ENCODE measurements at regions of chr22 and their contacts with region 1.

Region 1: DNA sequence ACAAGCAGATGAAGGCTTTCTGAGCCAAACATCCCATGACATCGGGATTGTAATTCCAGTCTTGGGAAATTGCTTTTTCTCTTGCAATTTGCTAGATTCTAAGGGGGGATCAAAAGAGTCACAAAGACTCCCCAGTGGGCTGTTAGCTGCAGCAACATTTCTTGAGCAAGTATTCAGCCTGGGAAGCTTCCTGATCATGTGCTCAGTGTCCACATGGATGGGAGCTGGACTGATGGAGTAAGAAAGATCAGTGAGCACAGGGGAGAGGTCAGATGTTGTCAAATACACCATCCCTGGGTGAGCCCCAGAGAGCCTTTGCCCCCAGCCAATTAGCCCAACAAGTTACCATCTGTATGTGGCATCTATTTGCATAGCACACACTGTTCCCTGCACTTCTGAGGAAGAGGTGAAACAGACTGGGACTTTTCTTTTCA is 10.2 kb upstream of the GRK3 start:
- DNase-seq: no peak
- H3K4me3 Mint-ChIP-seq: no peak overlapping the region
- H3K27ac Mint-ChIP-seq: no peak overlapping the region
- H3K4me1 Mint-ChIP-seq: peaks cover 6% of the 10 kb centered on the region
- H3K27me3 Mint-ChIP-seq: peaks cover 2% of the 10 kb centered on the region

Region 2: DNA sequence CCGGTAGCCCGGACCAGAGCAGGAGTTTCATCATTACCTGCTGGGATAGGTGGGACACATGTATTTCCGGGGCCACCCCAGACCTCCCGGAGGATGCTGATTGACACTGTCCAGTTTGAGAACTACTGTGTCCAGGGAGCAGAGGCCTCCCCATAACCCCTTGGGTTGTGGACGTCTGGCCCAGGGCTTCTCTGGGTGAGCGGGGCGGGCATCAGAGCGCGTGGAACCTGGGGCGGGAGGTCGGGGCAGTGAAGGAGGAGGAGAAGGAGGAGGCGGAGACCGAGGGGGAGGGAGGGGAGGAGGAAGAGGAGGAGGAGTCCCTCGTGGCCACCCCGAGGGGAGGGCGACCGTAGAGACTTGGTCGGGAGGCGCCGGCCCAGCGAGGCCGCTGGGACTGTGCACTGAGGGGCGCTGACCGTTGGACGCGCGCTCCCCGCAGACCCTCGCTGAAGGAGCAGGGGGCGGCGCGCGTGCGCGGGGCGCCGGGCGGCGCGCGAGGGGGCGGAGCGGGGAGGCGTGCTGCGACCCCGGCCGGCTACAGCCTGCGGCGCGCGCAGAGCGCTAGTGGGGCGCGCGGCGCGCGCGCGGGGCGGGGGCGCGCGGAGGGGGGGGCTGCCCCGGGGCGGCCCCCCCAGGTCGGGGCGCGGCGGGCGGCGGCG is 10.2 kb after region 1 on chr22 and contains the start of gene GRK3:
- CTCF ChIA-PET with region 1: interaction called, 10 read pairs
- POLR2A ChIA-PET with region 1: no interaction called
- DNase-seq: peak; percentile 80
- H3K4me3 Mint-ChIP-seq: peak within 1 kb of the TSS; percentile 96
- H3K27ac Mint-ChIP-seq: peak within 1 kb of the TSS; percentile 91
- H3K4me1 Mint-ChIP-seq: peaks cover 59% of the 10 kb centered on the region
- H3K27me3 Mint-ChIP-seq: peaks cover 4% of the 10 kb centered on the region
- total RNA-seq, gene GRK3: 23.4 to 24.2 TPM

Region 3: DNA sequence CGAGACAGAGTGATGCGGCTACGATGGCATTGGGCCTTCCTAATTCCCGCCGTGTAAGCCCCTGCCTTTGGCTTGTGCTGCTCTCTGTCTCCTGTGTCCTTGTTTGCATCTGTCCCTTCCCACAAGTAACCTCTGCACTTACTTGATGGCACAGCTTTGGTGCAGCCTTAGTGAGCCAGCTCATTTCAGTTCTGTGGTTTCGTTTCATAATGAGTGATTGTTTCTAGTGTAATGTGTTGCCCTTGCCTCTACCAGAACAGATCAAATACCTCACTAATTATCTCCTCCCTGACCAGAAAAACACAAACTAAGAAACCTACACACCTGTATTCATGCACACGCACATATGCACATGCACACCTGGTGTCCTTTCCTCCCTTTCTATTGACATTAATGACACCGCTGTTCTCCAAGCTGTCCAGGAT is 69.1 kb after region 1 on chr22:
- CTCF ChIA-PET with region 1: no interaction called
- POLR2A ChIA-PET with region 1: no interaction called
- DNase-seq: no peak
- H3K4me3 Mint-ChIP-seq: no peak overlapping the region
- H3K27ac Mint-ChIP-seq: peak overlapping the region; percentile 0
- H3K4me1 Mint-ChIP-seq: peaks cover 48% of the 10 kb centered on the region
- H3K27me3 Mint-ChIP-seq: no peaks in the 10 kb centered on the region